ENCODE measurements at regions of chr6 and their contacts with region 1.

Region 1: GRCh38 chr6:37239950-37240713 is 17.4 kb upstream of the TBC1D22B start:
- DNase-seq: peak; percentile 75 to 98 (median 82)
- ATAC-seq: peak; percentile 78
- H3K4me3 ChIP-seq: no peak overlapping the region
- H3K27ac ChIP-seq: peak overlapping the region; percentile 66
- H3K4me1 ChIP-seq: peaks cover 15 to 57% of the 10 kb centered on the region in 2 experiments
- H3K27me3 ChIP-seq: no peaks in the 10 kb centered on the region
- CTCF ChIP-seq: no peak
- EP300 ChIP-seq: no peak; the same call in 1 of the 2 replicates
- POLR2A ChIP-seq: no peak
- RAD21 ChIP-seq: peak; percentile 22 to 31; a peak in 3 of 4 replicates

Region 2: DNA sequence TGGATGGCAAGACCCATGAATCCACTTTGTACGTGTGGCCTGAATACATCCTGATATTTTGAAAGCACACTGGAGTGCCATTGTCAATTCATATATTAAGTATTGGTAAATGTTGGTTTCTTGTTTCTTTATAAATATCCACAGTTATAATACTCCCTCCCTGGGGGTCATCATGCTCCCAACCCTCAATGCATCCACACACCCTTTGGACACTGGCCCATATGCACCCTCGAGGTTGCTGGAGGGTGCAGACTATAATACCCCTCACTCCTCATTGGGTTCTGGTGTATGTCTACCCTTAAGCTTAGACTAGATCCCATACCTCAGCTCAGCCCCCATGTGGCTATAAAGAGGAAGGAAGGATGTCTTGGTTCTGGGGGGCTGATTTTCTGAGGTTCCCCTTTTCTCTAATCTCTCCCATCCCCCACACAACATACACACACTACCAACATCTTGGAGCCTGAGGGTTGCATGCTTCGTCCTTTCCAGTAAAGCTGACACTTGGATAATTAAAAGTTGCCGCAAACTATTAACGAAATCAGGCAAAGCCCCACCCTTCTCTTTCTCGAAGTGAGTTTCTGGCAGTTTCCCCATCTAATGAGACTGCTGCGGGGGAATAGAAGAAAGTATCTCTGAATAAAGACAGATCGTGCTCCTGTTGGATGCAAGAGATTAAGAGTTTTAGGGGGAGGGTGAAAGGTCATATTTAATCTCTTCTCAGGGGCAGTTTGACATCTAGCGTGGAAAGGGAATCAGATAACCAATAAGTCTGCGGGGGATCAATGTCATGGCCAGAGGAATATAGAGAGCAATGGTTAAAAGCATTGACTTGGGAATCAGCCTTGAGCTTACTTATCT is 62.8 kb before region 1 on chr6:
- CTCF ChIA-PET with region 1: no interaction called
- POLR2A ChIA-PET with region 1: no interaction called
- in situ Hi-C with region 1: no loop called
- intact Hi-C with region 1: no loop called
- DNase-seq: peak; percentile 41 to 83 (median 62)
- ATAC-seq: peak; percentile 59
- H3K4me3 ChIP-seq: no peak overlapping the region
- H3K27ac ChIP-seq: peak overlapping the region; percentile 82
- H3K4me1 ChIP-seq: peaks cover 32 to 52% of the 10 kb centered on the region in 2 experiments
- H3K27me3 ChIP-seq: no peaks in the 10 kb centered on the region
- CTCF ChIP-seq: peak; percentile 43 to 61 (median 53); a peak in 5 of 6 replicates
- EP300 ChIP-seq: peak; percentile 56
- POLR2A ChIP-seq: no peak; the same call in 1 of the 2 replicates
- RAD21 ChIP-seq: peak; percentile 47 to 71

Region 3: GRCh38 chr6:37303932-37304363 is 63.8 kb after region 1 on chr6:
- CTCF ChIA-PET with region 1: no interaction called
- POLR2A ChIA-PET with region 1: interaction called, 3 read pairs
- in situ Hi-C with region 1: no loop called
- intact Hi-C with region 1: loop called (anchors 5 kb)
- DNase-seq: peak; percentile 52 to 74 (median 57)
- ATAC-seq: peak; percentile 83
- H3K4me3 ChIP-seq: no peak overlapping the region
- H3K27ac ChIP-seq: no peak overlapping the region
- H3K4me1 ChIP-seq: peaks cover 20 to 30% of the 10 kb centered on the region in 2 experiments
- H3K27me3 ChIP-seq: no peaks in the 10 kb centered on the region
- CTCF ChIP-seq: peak; percentile 73 to 86 (median 82)
- EP300 ChIP-seq: no peak
- POLR2A ChIP-seq: no peak
- RAD21 ChIP-seq: peak; percentile 35 to 73

Region 4: DNA sequence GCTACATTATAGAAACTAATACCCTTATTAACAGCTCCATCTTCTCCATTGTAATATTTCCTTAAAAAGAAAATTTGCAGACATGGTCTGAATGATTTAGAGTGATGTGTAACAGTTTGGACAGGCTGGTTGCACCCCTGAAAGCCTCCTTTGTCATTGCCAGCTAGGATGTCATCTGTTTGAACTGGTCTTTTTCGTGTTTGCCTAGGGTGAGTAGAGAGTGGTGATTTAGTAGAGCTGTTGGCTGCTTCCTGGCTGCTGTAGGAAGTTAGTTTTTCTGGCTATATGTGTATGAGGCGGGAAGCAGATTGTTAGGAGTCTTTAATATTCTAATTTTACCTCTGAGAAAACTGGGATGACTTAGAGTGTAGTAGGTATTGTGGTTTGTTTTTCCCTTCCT is 680.5 kb after region 1 on chr6:
- CTCF ChIA-PET with region 1: no interaction called
- POLR2A ChIA-PET with region 1: no interaction called
- in situ Hi-C with region 1: no loop called
- intact Hi-C with region 1: no loop called
- DNase-seq: no peak
- ATAC-seq: no peak
- H3K4me3 ChIP-seq: no peak overlapping the region
- H3K27ac ChIP-seq: no peak overlapping the region
- H3K4me1 ChIP-seq: no peaks in the 10 kb centered on the region
- H3K27me3 ChIP-seq: no peaks in the 10 kb centered on the region
- CTCF ChIP-seq: no peak
- EP300 ChIP-seq: no peak
- POLR2A ChIP-seq: no peak
- RAD21 ChIP-seq: no peak